A549 (cell line): ENCODE measurements at regions of chr17 and their contacts with region 1.

Region 1: DNA sequence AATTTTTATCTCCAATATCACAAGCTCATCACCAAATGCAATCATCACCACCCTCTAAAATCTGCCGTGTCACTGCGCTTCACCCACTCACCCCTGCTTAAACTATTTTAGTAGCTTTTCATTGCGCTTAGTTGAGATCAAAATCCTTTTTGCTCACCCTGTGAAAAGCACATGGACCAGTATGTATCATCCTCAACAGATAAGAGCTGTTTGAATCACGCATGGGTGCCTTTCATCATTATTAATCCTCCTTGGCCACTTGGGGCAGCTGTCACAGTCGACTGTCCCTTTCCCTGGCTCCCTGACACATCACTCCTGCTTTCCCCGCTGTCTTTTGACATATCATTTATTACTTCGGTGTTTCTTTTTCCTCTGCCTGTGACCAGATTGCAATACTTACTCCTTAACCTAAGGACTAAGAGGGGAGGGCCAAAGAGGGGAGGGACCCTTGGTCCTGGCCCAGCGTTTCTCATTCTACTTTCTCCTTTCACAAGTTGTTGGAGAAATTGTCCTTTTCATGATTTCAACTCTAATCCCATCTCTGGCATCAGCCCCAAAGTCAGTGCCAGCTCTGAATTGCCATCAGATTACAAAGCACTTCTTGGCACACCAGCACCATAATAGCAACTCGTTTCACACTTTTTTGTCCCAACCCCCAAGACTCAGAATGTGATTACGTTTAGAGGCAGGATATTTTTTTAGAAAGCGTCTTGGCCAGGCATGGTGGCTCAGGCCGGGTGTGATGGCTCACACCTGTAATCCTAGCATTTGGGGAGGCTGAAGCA is 8.6 kb upstream of the KDM6B start:
- DNase-seq: peak; percentile 47 to 67
- ATAC-seq: peak; percentile 70 to 78
- H3K4me3 ChIP-seq: no peak overlapping the region
- H3K27ac ChIP-seq: no peak overlapping the region
- H3K4me1 ChIP-seq: no peaks in the 10 kb centered on the region; the same call in 2 of the 3 replicates
- CTCF ChIP-seq: no peak
- EP300 ChIP-seq: no peak
- POLR2A ChIP-seq: no peak
- RAD21 ChIP-seq: no peak

Region 2: GRCh38 chr17:7809086-7809790 is 16.2 kb before region 1 on chr17:
- CTCF ChIA-PET with region 1: interaction called, 32 read pairs
- POLR2A ChIA-PET with region 1: no interaction called
- DNase-seq: no peak
- ATAC-seq: peak; percentile 32 to 38; a peak in 3 of 6 replicates
- H3K4me3 ChIP-seq: no peak overlapping the region
- H3K27ac ChIP-seq: peak overlapping the region in 1 of 2 experiments; percentile 47; a peak in 1 of 6 replicates
- H3K4me1 ChIP-seq: peaks cover 11% of the 10 kb centered on the region
- CTCF ChIP-seq: no peak
- EP300 ChIP-seq: no peak
- POLR2A ChIP-seq: no peak
- RAD21 ChIP-seq: no peak

Region 3: DNA sequence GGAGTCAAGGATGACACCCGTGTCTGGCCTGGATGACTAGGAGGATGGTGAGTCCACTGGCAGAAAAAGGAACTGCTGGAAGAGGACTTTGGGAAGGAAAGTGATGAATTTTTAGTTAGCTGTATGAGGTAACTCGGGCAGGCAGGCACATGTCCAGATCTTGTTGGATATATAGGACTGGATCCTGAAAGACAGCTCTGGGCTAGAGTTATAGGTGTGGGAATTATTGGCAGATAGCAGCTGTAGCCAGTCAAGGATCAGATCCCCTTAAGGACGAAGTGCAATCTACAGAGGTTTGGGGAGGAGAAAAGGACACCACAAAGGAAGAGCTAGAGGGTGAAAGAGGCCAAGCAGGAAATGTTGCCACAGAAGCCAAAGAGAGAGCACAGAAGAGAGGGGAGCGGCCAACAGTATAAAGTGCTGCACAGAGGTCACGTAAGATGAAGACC is 42.5 kb after region 1 on chr17:
- CTCF ChIA-PET with region 1: interaction called, 122 read pairs
- POLR2A ChIA-PET with region 1: no interaction called
- DNase-seq: no peak
- ATAC-seq: no peak
- H3K4me3 ChIP-seq: no peak overlapping the region
- H3K27ac ChIP-seq: no peak overlapping the region
- H3K4me1 ChIP-seq: peaks cover 5% of the 10 kb centered on the region; the same call in 1 of the 3 replicates
- CTCF ChIP-seq: no peak
- EP300 ChIP-seq: no peak
- POLR2A ChIP-seq: no peak
- RAD21 ChIP-seq: no peak